ENCODE measurements at regions of chr4 and their contacts with region 1.

Region 1: GRCh38 chr4:2843263-2843940 is at the start of gene ADD1:
- DNase-seq: peak; percentile 91 to 99 (median 93)
- H3K4me3 ChIP-seq: peak within 1 kb of the TSS; percentile 91
- H3K27ac ChIP-seq: peak within 1 kb of the TSS; percentile 76 to 97
- H3K4me1 ChIP-seq: peaks cover 9% of the 10 kb centered on the region
- H3K27me3 ChIP-seq: no peaks in the 10 kb centered on the region
- CTCF ChIP-seq: no peak
- EP300 ChIP-seq: no peak
- POLR2A ChIP-seq: peak; percentile 84
- total RNA-seq, gene ADD1: 166 to 447 (median 389) TPM

Region 2: DNA sequence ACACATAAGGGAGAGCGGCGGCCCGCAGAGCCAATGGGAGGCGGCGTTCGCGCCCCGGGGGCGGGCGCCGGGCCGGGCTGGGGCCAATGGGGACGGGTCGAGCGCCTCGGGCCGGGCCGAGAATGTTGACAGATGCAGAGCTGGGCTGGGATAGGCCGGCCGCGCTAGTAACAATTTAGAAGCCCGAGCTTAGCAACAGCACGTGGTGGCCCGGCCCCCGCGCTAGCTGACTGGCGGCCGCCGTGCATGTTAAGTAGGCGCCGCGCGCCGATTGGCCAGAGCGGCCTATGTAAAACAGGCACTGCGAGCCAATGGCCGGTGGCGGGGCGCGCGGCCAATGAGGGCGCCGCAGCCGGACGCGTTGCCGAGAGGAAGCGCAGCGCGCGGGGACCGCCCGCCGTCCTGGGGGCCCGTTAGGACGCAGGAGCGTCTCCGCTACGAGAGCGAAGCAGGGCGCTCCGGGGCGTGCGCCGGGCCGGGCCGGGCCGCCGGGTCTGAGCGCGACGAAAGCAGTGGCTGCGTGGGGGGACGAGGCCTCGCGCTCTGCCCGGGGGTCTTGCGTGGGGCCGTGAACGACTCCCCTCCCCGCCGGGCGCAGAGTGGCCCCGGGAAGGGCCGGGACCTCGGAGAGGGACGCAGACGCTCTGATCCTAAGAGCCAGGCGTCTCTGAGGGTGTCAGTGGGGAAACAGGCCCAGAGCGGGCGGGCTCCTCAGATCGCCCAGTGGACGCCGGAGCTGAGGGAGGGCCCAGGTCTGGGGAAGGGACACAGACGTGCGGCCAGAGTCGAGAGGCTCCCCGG is 581.1 kb before region 1 on chr4:
- intact Hi-C with region 1: loop called in 1 of 4 experiments (anchors 5 kb)
- DNase-seq: peak; percentile 98 to 100 (median 99)
- H3K4me3 ChIP-seq: peak overlapping the region; percentile 43
- H3K27ac ChIP-seq: peak overlapping the region; percentile 61 to 97
- H3K4me1 ChIP-seq: peaks cover 12% of the 10 kb centered on the region
- H3K27me3 ChIP-seq: no peaks in the 10 kb centered on the region
- CTCF ChIP-seq: no peak
- EP300 ChIP-seq: no peak
- POLR2A ChIP-seq: peak; percentile 88

Region 3: GRCh38 chr4:2934813-2935761 is 91.7 kb after region 1 on chr4:
- intact Hi-C with region 1: loop called in 1 of 4 experiments (anchors 10 kb)
- DNase-seq: peak; percentile 96 to 99 (median 98)
- H3K4me3 ChIP-seq: peak overlapping the region; percentile 96
- H3K27ac ChIP-seq: peak overlapping the region; percentile 32 to 78
- H3K4me1 ChIP-seq: peaks cover 8% of the 10 kb centered on the region
- H3K27me3 ChIP-seq: no peaks in the 10 kb centered on the region
- CTCF ChIP-seq: no peak
- EP300 ChIP-seq: no peak
- POLR2A ChIP-seq: peak; percentile 93

Region 4: DNA sequence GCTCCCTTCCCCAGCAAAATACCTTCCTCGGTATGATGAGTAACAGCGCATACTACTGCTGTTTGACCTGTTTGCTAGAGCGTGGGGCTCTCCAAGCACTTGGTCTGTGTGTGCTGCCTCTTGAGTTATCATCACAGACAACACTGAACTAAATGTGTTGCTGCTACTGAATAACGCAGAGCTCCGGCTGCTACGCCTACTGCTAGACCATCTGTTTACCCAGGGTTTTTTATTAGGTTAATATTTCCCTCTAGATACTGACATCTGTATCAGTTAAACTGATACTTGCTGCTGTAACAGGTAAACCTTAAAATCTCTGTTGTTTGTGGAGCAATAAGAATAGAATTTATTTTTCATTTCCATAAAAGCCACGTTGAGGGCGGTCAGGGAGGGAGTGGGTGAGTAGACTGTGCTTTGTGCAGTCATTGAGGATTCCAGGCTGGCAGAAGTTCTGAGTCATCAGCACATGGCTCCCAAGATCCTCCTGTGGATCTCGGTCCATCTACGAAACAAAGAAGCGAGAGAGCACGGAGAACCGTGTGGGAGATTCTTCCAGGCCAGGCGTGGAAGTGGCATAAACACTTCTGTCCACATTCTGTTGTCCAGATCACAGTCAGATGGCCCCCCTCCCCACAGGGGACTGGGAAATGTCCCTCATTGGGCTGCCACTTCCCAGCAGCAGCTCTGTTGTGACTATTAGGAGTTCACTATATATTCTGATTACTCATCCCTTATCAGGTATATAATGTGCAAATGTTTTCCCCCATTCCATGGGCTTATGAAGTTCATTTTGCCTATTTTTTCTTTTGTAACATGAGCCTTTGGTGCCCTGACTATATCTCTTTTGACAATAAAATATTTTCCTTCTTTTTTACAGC is 134.0 kb after region 1 on chr4:
- intact Hi-C with region 1: no loop called
- DNase-seq: no peak
- H3K4me3 ChIP-seq: no peak overlapping the region
- H3K27ac ChIP-seq: no peak overlapping the region
- H3K4me1 ChIP-seq: no peaks in the 10 kb centered on the region
- H3K27me3 ChIP-seq: no peaks in the 10 kb centered on the region
- CTCF ChIP-seq: no peak
- EP300 ChIP-seq: no peak
- POLR2A ChIP-seq: no peak